H1 (cell line): ENCODE measurements at regions of chrX and their contacts with region 1.

Region 1: DNA sequence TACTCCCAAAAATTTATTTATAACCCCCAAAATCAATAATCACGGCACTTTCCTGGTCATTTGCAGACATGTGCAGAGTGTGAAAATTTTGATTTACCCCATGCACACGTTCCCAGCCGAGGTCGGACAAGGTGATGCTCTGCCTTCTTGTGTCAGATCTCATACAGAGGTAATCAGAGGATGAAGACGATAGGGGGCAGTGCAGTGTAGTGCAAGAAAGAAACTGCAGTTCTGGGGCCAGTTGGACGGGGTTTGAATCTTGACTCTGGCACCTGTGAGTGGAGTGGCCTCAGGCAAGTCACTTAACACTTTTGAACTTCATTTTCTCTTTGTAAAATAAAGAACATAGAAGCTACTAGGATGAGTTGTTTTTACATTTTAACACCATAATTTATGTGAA is 88.4 kb downstream of the FRMPD3 start:
- DNase-seq: peak in 1 of 2 experiments; percentile 51
- H3K4me3 ChIP-seq: no peak overlapping the region
- H3K27ac ChIP-seq: no peak overlapping the region
- H3K4me1 ChIP-seq: no peaks in the 10 kb centered on the region
- H3K27me3 ChIP-seq: no peaks in the 10 kb centered on the region
- CTCF ChIP-seq: peak; percentile 28 to 68 (median 60)
- EP300 ChIP-seq: no peak
- POLR2A ChIP-seq: no peak
- RAD21 ChIP-seq: peak; percentile 77 to 83

Region 2: GRCh38 chrX:107454302-107454701 is 83.5 kb before region 1 on chrX:
- CTCF ChIA-PET with region 1: no interaction called
- POLR2A ChIA-PET with region 1: no interaction called
- DNase-seq: no peak
- H3K4me3 ChIP-seq: no peak overlapping the region
- H3K27ac ChIP-seq: no peak overlapping the region
- H3K4me1 ChIP-seq: peaks cover 3 to 13% (median 10%) of the 10 kb centered on the region in 4 experiments; a peak in 5 of 7 replicates
- H3K27me3 ChIP-seq: peaks cover 0 to 12% (median 7%) of the 10 kb centered on the region in 4 experiments; a peak in 5 of 7 replicates
- CTCF ChIP-seq: no peak
- EP300 ChIP-seq: no peak
- POLR2A ChIP-seq: no peak
- RAD21 ChIP-seq: no peak

Region 3: GRCh38 chrX:107549504-107549903 is 11.7 kb after region 1 on chrX:
- CTCF ChIA-PET with region 1: interaction called, 10 read pairs
- POLR2A ChIA-PET with region 1: no interaction called
- DNase-seq: no peak
- H3K4me3 ChIP-seq: no peak overlapping the region
- H3K27ac ChIP-seq: no peak overlapping the region
- H3K4me1 ChIP-seq: no peaks in the 10 kb centered on the region
- H3K27me3 ChIP-seq: no peaks in the 10 kb centered on the region
- CTCF ChIP-seq: no peak
- EP300 ChIP-seq: no peak
- POLR2A ChIP-seq: no peak
- RAD21 ChIP-seq: no peak

Region 4: DNA sequence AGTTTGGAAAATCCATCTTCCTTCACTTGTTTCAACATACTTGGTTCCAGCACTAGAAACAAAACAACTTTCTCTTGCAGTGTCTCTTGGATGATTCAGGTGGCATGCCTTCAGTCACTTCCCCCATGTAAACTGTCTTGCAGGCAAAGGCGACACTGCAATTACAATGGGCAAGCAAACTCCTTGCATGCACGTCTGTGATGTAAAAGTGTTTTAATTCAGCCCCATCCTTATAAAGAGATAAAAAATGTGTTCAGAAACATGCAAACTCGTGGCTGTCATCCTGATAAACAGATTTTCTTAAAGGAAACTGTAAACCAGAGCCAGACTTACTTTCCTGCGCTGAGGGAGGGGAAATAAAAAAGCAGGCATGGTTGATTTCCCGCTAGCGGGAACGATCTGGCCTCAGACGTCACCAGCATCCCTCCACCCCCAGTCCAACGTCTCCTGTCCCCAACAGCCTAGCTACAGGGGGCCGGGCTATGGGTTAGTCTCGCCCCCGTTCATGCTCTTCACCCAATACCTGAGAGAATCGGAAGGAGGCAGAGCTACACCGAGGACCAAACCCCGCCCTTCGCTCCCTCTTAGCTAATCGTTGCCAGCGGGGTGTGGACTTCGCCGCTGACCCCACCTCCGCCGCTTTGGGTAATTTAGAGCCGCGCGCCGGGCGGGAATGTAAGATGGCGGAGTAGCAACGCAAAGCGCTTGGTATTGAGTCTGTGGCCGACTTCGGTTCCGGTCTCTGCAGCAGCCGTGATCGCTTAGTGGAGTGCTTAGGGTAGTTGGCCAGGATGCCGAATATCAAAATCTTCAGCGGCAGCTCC is 90.2 kb after region 1 on chrX and contains the start of gene PRPS1:
- CTCF ChIA-PET with region 1: interaction called, 11 read pairs
- POLR2A ChIA-PET with region 1: no interaction called
- DNase-seq: peak; percentile 77 to 83
- H3K4me3 ChIP-seq: peak within 1 kb of the TSS; percentile 74 to 94 (median 87)
- H3K27ac ChIP-seq: peak within 1 kb of the TSS; percentile 74
- H3K4me1 ChIP-seq: no peaks in the 10 kb centered on the region; a peak in 1 of 7 replicates
- H3K27me3 ChIP-seq: no peaks in the 10 kb centered on the region
- CTCF ChIP-seq: no peak
- EP300 ChIP-seq: no peak
- POLR2A ChIP-seq: peak; percentile 39 to 69
- RAD21 ChIP-seq: no peak
- total RNA-seq, gene PRPS1: 102 and 110 TPM in 2 replicates